ENCODE measurements at regions of chr10 and their contacts with region 1.

Region 1: GRCh38 chr10:3785257-3785850 is 345 bp upstream of the KLF6 start:
- DNase-seq: peak; percentile 99
- ATAC-seq: peak; percentile 78
- H3K4me3 Mint-ChIP-seq: peak overlapping the region; percentile 82
- H3K27ac Mint-ChIP-seq: peak overlapping the region; percentile 96
- H3K4me1 Mint-ChIP-seq: peaks cover 32% of the 10 kb centered on the region
- H3K27me3 Mint-ChIP-seq: no peaks in the 10 kb centered on the region

Region 2: GRCh38 chr10:3197348-3198003 is 587.9 kb before region 1 on chr10:
- CTCF ChIA-PET with region 1: no interaction called
- POLR2A ChIA-PET with region 1: interaction called, 3 read pairs
- intact Hi-C with region 1: loop called in 1 of 2 experiments (anchors 5 kb)
- DNase-seq: peak; percentile 92
- ATAC-seq: peak; percentile 90
- H3K4me3 Mint-ChIP-seq: no peak overlapping the region
- H3K27ac Mint-ChIP-seq: no peak overlapping the region
- H3K4me1 Mint-ChIP-seq: peaks cover 11% of the 10 kb centered on the region
- H3K27me3 Mint-ChIP-seq: peaks cover 60% of the 10 kb centered on the region

Region 3: GRCh38 chr10:3222065-3222464 is 563.3 kb before region 1 on chr10:
- CTCF ChIA-PET with region 1: no interaction called
- POLR2A ChIA-PET with region 1: no interaction called
- intact Hi-C with region 1: no loop called
- DNase-seq: peak; percentile 19
- ATAC-seq: no peak
- H3K4me3 Mint-ChIP-seq: no peak overlapping the region
- H3K27ac Mint-ChIP-seq: no peak overlapping the region
- H3K4me1 Mint-ChIP-seq: peaks cover 3% of the 10 kb centered on the region
- H3K27me3 Mint-ChIP-seq: peaks cover 15% of the 10 kb centered on the region

Region 4: DNA sequence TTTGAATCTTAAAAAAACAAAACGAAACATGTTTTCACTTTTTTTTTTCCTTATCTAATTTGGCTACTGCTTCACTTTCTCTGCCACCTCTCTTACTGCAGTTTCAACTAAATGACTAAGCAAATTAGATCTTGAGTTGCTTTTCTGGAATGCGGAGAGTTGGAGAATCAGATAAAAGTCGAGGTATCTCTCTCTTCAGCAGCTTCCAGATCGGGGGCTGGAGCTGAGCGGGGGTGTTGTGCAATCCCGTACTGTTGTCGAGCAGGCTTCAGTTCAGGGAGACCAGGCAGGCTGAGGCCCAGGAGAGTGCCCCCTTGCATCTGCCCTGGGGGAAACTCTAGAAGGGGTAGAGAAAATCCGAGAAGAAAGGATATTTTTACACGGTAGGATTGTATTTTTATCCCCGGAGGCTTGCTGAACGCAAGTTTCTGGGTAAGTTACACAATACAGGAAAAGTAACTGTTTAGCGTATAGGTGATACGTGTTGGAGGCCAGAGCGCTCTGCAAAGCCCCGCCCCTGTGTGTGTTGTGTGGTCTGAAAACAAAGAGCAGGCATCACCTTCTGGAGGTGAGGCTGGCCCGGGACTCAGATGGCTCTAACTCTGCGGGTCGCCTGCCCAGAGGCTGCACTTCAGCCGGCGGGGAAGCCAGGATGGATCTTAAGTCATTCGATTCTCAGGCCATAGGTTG is 116.9 kb before region 1 on chr10:
- CTCF ChIA-PET with region 1: no interaction called
- POLR2A ChIA-PET with region 1: no interaction called
- intact Hi-C with region 1: loop called in 1 of 2 experiments (anchors 5 kb)
- DNase-seq: peak; percentile 79
- ATAC-seq: peak; percentile 90
- H3K4me3 Mint-ChIP-seq: peak overlapping the region; percentile 67
- H3K27ac Mint-ChIP-seq: peak overlapping the region; percentile 81
- H3K4me1 Mint-ChIP-seq: peaks cover 41% of the 10 kb centered on the region
- H3K27me3 Mint-ChIP-seq: no peaks in the 10 kb centered on the region

Region 5: DNA sequence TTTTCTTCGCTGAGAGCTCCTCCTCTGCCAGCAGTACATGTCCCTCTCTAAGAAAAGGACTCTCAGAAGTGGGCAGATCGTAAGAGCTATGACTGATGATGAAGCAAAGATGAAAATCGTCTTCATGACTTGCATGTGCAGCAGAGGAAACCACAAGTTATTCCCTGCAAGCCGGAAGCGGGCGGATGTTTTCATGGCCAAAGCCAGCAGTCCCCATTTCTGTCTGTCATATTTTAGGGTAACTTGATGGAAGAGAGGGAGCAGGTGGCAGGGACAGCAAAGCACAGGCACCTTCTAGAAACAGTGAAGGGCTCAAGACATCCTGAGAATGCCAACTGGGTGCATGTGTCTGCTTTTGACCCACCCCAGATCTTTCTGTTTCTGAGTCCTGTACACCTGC is 20.2 kb before region 1 on chr10:
- CTCF ChIA-PET with region 1: interaction called, 4 read pairs
- POLR2A ChIA-PET with region 1: interaction called, 26 read pairs
- intact Hi-C with region 1: no loop called
- DNase-seq: peak; percentile 76
- ATAC-seq: peak; percentile 63
- H3K4me3 Mint-ChIP-seq: peak overlapping the region; percentile 51
- H3K27ac Mint-ChIP-seq: peak overlapping the region; percentile 79
- H3K4me1 Mint-ChIP-seq: peaks cover 75% of the 10 kb centered on the region
- H3K27me3 Mint-ChIP-seq: no peaks in the 10 kb centered on the region

Region 6: GRCh38 chr10:3828404-3829155 is 43.2 kb after region 1 on chr10:
- CTCF ChIA-PET with region 1: interaction called, 3 read pairs
- POLR2A ChIA-PET with region 1: interaction called, 7 read pairs
- intact Hi-C with region 1: loop called in 1 of 2 experiments (anchors 1 kb)
- DNase-seq: peak; percentile 77
- ATAC-seq: peak; percentile 62
- H3K4me3 Mint-ChIP-seq: peak overlapping the region; percentile 56
- H3K27ac Mint-ChIP-seq: peak overlapping the region; percentile 98
- H3K4me1 Mint-ChIP-seq: peaks cover 63% of the 10 kb centered on the region
- H3K27me3 Mint-ChIP-seq: no peaks in the 10 kb centered on the region

Region 7: GRCh38 chr10:3873728-3874461 is 88.5 kb after region 1 on chr10:
- CTCF ChIA-PET with region 1: interaction called, 3 read pairs
- POLR2A ChIA-PET with region 1: interaction called, 7 read pairs
- intact Hi-C with region 1: loop called in 1 of 2 experiments (anchors 1 kb)
- DNase-seq: no peak
- ATAC-seq: peak; percentile 27
- H3K4me3 Mint-ChIP-seq: peak overlapping the region; percentile 15
- H3K27ac Mint-ChIP-seq: peak overlapping the region; percentile 89
- H3K4me1 Mint-ChIP-seq: peaks cover 65% of the 10 kb centered on the region
- H3K27me3 Mint-ChIP-seq: no peaks in the 10 kb centered on the region

Region 8: DNA sequence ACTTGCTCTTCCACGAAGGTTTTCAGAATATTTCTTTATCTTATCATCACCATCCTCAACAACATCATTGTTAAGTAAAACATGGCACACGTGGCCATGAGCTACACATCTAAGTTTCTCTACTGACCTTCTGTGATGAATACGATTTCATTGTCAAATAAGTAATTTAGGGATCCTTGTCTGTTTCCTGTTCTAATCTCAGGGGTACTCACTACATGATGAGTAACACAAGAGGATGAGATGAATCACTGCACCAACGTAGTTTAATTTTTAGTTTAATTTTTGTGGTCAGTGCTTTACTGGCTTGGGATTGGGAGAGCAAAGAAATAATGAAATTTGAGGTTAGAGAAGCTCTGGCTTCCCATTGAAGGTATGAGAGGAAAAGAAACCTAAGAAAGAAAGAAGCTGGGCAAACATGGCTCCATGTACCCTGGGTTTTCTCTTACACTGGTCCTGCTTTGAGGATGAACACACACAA is 461.6 kb after region 1 on chr10:
- CTCF ChIA-PET with region 1: interaction called, 3 read pairs
- POLR2A ChIA-PET with region 1: no interaction called
- intact Hi-C with region 1: loop called in 1 of 2 experiments (anchors 5 kb)
- DNase-seq: no peak
- ATAC-seq: peak; percentile 54
- H3K4me3 Mint-ChIP-seq: no peak overlapping the region
- H3K27ac Mint-ChIP-seq: peak overlapping the region; percentile 48
- H3K4me1 Mint-ChIP-seq: peaks cover 54% of the 10 kb centered on the region
- H3K27me3 Mint-ChIP-seq: peaks cover 5% of the 10 kb centered on the region

Measured in activated CD4-positive, alpha-beta T cell treated with anti-CD3 and anti-CD28 coated beads for 36 hours (primary cell).